Activated CD4-positive, alpha-beta T cell treated with anti-CD3 and anti-CD28 coated beads, Interleukin-2, amount 10 ng/mL, durations not matched to agents 24 days and 14 days (primary cell): ENCODE measurements at regions of chr20 and their contacts with region 1.

Region 1: DNA sequence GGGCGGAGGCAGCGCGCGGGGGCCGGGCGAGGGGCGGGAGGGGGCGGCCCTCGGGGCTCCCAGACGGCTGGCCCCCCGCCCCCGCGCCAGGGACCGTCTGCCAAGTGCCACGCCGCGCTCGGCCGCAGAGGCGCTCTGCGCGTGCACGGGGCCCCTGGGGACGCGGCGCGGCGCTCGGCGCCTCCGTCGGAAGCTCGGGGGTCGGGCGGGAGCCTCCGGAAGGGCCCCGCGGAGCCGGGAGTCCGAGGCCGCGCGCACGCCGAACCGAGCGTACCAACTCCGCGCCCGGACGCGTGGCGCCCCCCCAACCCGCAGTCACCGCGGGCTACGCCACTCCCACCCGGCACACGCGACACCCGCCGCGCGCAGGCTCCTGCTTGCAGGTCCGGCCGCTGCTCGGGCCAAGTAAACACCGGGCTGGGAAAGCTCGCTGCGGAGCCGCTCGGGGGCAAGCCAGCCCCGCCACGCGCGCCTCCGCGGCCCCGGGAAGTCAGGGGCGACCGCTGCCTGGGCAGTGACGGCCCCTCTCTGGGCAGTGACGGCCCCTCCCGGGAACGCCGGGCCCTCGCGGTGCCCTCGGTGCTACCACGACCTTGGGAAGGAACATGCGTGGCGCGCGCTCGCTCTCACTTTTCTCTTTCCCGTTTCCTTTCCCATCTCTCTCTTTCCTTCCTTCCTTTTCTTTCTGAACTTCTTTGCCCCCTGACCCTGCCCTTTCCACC is 384 bp upstream of the PREX1 start:
- DNase-seq: peak; percentile 96
- H3K4me3 Mint-ChIP-seq: peak overlapping the region; percentile 88
- H3K27ac Mint-ChIP-seq: peak overlapping the region; percentile 92
- H3K4me1 Mint-ChIP-seq: peaks cover 47% of the 10 kb centered on the region
- H3K27me3 Mint-ChIP-seq: peaks cover 11% of the 10 kb centered on the region

Region 2: DNA sequence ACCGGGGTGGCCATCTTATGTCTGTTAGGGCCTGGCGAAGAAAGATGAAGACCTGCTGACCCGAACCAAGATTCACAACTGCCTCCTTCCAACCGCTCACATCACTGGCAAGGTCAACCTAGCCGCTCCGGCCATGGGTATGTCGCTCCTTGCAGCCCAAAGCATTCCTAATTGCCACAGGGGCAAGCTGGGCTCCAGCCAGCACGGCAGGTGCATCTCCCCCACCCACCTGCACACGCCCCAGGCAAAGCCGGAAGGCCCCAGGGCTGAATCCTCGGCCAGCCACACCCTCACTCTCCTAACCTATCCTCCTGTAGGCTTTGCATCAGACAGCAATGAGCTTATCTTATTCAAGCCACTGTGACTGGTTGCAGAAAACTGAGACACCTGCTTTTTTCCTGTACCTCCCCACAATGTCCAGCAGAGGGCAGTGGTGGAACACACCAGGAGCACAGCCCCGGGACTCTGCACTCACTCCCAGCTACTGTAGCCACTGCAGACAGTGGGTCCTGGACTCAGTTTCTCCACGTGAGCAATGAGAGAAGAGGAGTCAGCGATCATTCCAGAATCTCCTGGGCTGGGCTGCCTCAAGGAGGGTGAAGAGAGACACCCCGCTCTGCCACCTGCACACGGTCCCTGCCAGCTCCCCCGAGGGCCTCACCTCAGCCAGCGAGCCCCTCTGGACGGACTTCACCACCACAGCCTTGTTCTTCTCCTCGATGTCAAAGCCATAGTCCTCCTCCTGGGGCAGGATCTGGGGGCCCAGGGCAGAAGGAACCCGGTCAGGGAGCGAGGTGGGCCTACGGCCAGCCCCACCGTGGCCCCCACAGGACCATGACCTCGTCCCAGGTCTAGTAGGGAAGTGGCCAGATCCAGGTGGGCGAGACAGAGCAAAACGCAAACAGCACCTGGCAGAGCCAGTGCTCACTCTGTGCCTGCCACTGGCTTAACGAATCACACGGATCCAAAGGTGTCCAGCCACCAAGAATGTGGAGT is 170.4 kb before region 1 on chr20:
- intact Hi-C with region 1: loop called (anchors 5 kb)
- DNase-seq: peak; percentile 89
- H3K4me3 Mint-ChIP-seq: no peak overlapping the region
- H3K27ac Mint-ChIP-seq: no peak overlapping the region
- H3K4me1 Mint-ChIP-seq: peaks cover 13% of the 10 kb centered on the region
- H3K27me3 Mint-ChIP-seq: no peaks in the 10 kb centered on the region

Region 3: DNA sequence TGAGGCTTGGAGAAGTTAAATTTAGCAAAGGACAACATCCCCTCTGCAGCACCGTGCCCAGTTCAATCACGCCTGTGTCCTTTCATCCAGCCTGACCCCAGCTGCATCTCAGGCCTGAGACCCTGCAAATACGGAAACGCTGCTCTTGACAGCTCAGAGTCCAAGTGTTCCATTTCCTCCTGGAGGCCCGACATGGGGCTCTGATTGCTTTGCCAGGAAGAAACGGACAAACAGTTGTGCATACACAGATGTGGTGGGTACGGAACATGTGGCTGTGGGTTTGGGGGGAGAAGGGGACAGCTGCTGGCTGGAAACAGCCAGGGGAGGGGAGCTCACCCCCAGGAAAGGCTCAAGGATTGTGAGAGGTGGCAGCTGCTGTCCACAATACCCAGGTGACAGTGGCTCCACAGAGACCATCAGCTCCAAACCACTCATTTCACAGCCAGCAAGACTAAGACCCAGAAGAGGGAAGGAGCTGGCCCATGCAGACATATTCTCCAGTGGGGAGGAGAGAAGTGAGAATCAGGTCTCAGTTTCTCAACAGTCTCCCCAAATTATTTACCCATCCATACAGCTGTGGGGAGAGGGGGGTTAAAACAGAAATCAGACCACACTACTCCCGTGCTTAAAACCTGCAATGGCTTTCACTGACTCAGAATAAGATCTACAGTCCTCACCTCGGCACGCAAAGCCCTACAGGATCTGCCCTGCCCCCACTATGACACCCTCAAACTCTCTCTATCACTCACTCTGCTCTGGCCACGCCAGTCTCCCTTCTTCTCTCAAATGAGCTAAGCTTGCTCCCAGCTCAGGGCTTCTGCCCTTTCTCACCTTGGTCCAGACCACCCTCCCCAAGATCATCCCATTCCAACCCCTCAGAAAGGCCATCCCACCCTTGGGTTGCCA is 89.5 kb before region 1 on chr20:
- intact Hi-C with region 1: loop called (anchors 1 kb)
- DNase-seq: peak; percentile 89
- H3K4me3 Mint-ChIP-seq: peak overlapping the region; percentile 70
- H3K27ac Mint-ChIP-seq: peak overlapping the region; percentile 91
- H3K4me1 Mint-ChIP-seq: peaks cover 56% of the 10 kb centered on the region
- H3K27me3 Mint-ChIP-seq: no peaks in the 10 kb centered on the region

Region 4: DNA sequence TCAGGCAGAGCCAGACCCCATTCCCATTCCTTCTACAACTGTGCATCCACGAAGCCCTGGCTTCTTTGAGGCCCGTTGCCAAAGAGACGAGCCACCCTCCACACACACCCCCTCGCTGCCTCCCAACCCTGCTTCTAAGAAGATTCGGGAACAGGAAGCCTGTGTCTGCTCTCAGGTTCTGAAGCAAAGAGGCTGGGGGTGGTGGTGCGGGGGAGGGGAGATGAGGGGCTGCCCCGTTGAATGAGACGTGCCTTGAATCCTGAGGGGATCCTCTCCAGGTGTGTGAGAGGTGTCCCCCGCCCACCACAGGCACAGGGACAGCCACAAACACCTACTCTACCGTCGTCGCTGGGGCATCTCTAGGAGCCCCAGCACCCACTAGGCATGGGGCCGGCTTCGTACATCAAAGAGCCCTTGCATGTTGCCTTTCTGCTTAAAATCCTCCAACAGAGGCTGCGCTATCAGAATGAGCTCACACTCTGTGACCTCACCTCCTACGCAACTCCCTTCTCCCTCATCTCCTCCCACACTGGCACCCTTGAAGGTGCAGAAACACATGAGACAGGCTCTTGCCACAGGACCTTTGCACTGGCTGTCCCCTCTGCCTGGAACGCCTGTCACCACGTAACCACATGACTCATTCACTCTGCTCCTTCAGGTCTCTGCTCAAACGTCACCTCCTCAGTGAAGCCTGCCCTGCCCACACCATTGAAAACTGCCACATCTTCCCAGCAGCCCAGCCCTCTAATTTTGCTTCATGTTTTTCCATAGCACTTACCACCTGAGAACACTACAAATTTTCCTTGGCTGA is 58.9 kb before region 1 on chr20:
- intact Hi-C with region 1: loop called (anchors 1 kb)
- DNase-seq: peak; percentile 94
- H3K4me3 Mint-ChIP-seq: peak overlapping the region; percentile 64
- H3K27ac Mint-ChIP-seq: peak overlapping the region; percentile 94
- H3K4me1 Mint-ChIP-seq: peaks cover 81% of the 10 kb centered on the region
- H3K27me3 Mint-ChIP-seq: peaks cover 2% of the 10 kb centered on the region

Region 5: GRCh38 chr20:48846498-48847485 is 18.6 kb after region 1 on chr20:
- intact Hi-C with region 1: loop called (anchors 1 kb)
- DNase-seq: peak; percentile 67
- H3K4me3 Mint-ChIP-seq: peak overlapping the region; percentile 23
- H3K27ac Mint-ChIP-seq: peak overlapping the region; percentile 89
- H3K4me1 Mint-ChIP-seq: peaks cover 21% of the 10 kb centered on the region
- H3K27me3 Mint-ChIP-seq: peaks cover 17% of the 10 kb centered on the region

Region 6: DNA sequence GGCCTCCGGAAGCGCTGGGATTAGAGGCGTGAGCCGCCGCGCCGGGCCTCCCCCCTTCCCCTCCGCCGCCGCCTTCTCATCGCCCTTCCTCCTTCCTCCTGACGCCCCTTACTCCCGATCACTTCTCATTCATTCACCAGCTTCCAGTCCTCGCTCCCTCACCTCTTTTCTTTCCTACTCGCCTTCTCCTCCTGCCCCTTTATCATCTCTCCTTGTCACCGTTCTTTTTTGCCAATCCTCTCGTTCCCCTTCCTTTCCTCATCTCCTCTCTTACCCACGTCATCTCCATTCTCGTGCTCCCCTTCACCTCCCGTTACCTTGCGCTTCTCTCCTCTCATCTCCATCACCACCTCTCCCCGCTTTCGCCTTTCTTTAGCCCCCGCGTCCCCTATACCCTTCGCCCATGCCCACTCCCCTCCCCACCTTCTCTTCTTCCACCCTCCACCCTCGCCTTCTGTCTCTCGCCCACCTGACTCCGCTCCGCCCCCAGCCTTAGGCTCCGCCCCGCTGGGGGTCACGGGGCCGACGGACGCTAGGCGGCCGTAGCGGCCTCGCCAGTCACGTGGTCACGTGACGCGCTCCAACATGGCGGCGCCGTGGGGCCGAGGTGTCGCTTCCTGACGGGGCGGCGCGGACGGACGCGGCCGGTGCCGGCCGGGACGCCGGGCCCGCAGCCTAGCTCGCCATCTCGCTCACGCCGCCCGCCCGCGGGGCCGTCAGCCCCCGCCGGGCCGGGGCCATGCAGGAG is 93.1 kb after region 1 on chr20 and contains the start of gene ARFGEF2:
- intact Hi-C with region 1: loop called (anchors 5 kb)
- DNase-seq: peak; percentile 100
- H3K4me3 Mint-ChIP-seq: peak within 1 kb of the TSS; percentile 95
- H3K27ac Mint-ChIP-seq: peak within 1 kb of the TSS; percentile 97
- H3K4me1 Mint-ChIP-seq: peaks cover 37% of the 10 kb centered on the region
- H3K27me3 Mint-ChIP-seq: peaks cover 4% of the 10 kb centered on the region
- total RNA-seq, gene ARFGEF2: 28.0 and 30.9 TPM in 2 replicates

Region 7: DNA sequence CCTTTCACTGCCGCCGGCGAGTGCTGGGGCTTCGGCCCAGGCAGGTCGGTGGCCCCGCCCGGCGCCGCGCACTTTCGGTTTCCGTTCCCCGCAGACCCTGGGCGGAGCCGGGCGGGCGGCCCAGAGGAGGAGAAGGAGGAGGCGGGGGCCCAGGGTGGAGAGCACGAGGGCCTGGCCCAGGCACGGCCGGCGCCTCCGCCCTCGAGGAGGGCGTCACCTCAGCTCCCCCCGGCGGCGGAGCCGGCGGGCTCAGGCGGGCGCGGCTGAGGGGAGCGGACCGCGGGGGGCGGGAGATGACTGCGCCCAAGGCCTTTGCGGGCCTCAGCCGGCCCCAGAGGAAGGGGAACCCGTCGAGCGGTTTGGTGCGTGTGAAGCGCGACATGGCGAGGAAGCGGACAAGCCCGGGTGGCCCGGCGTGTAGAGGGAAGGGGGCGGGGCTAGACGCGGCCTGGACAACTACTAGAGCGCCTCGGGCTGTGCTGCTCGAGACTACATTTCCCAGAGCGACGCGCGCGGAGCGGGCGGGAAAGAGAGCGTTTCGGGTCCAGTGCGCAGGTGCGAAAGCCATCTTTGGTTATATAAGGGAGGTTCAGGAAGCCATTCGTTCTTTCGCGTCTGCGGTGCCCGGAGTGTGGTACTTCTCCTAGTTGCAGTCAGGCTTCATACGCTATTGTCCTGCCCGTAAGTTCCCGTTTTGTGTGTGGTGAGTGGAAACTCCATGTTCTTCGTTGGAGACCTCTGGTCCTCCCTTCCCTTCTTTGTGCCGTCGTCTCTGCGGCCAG is 450.0 kb after region 1 on chr20 and contains the start of gene ZNFX1:
- intact Hi-C with region 1: loop called (anchors 5 kb)
- DNase-seq: peak; percentile 99
- H3K4me3 Mint-ChIP-seq: peak within 1 kb of the TSS; percentile 99
- H3K27ac Mint-ChIP-seq: peak within 1 kb of the TSS; percentile 99
- H3K4me1 Mint-ChIP-seq: peaks cover 52% of the 10 kb centered on the region
- H3K27me3 Mint-ChIP-seq: no peaks in the 10 kb centered on the region
- total RNA-seq, gene ZNFX1: 61.2 and 61.5 TPM in 2 replicates

Region 8: DNA sequence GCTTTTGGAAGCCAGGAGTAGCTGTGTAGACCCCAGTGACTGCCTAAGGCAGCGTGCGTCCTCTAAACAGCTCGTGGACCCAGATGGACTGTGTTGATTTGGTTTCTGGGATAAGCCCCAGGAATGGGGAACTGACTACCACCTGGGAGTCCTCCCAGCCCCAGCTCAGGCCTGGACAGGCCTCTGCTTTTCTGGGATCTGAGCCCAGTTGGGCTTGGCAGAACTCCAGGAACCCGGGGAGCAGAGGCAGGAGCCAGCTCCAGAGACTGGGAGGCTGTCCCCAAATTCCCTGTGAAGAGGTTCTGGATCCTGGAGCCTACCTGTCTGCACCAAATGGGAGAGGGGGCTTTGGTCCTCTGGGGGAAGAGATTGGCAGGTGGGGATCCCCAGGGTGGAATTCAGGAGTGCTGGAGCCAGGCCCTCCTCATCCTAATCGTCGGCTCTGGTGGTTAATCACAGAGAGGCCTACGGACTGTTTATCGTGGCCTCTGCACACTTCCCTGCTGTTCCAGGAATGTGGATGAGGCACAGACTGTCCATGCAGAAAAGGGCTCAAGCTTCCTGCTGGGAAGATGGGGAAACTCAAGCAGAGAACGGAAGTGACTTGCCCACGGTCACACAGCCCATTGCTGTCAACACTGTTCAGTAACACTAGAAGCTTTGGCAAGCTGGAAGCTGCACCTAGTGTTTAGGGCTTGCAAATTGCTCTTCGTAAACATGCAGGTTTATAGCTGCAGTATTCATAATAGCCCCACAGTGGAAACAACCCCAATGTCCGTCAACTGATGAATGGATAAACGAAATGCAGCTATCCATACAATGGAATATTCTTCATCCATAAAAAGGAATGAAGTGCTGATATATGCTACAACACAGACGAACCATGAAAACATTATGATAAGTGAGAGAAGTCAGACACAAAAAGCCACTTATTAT is 553.6 kb after region 1 on chr20:
- intact Hi-C with region 1: no loop called
- DNase-seq: no peak
- H3K4me3 Mint-ChIP-seq: no peak overlapping the region
- H3K27ac Mint-ChIP-seq: no peak overlapping the region
- H3K4me1 Mint-ChIP-seq: peaks cover 4% of the 10 kb centered on the region
- H3K27me3 Mint-ChIP-seq: peaks cover 16% of the 10 kb centered on the region